ENCODE measurements at regions of chr14 and their contacts with region 1.

Region 1: GRCh38 chr14:106459971-106460730 is 933.8 kb downstream of the TMEM121 start:
- DNase-seq: peak; percentile 75
- H3K4me3 ChIP-seq: no peak overlapping the region
- H3K27ac ChIP-seq: no peak overlapping the region
- H3K4me1 ChIP-seq: no peaks in the 10 kb centered on the region
- H3K27me3 ChIP-seq: no peaks in the 10 kb centered on the region
- CTCF ChIP-seq: peak; percentile 77

Region 2: DNA sequence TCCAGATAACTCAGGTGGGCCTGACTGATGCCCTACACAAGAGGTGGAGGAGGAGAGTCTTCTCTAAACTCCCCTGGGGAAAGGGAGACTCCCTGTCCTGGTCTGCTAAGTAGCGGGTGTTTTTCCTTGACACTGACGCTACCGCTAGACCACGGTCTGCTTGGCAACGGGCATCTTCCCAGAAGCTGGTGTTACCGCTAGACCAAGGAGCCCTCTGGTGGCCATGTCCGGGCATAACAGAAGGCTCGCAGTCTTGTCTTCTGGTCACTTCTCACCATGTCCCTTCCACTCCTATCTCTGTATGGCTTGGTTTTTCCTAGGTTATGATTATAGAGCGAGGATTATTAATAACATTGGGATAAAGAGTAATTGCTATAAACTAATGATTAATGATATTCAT is 31.7 kb after region 1 on chr14:
- CTCF ChIA-PET with region 1: no interaction called
- POLR2A ChIA-PET with region 1: no interaction called
- intact Hi-C with region 1: loop called (anchors 5 kb)
- DNase-seq: peak; percentile 43
- H3K4me3 ChIP-seq: no peak overlapping the region
- H3K27ac ChIP-seq: no peak overlapping the region
- H3K4me1 ChIP-seq: peaks cover 14% of the 10 kb centered on the region
- H3K27me3 ChIP-seq: no peaks in the 10 kb centered on the region
- CTCF ChIP-seq: peak; percentile 58

Measured in A673 (cell line).